IMR-90 (cell line): ENCODE measurements at regions of chr13 and their contacts with region 1.

Region 1: DNA sequence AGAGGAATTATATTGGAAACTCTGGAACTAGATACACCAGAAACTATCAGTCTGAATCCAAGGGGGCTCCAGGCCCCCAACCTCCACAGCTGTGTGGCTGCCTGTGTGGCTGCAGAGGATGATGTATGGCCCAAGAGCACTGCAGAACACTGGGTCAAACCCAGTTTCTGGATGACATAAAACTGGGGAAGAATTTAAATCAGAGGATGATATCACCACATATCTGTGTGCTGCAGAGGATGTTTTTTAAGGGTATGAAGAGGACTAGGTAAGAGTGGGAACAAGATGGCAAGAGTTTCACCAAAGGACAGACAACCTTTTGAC is 226.4 kb downstream of the SUCLA2 start:
- DNase-seq: no peak
- ATAC-seq: no peak
- H3K4me3 ChIP-seq: no peak overlapping the region
- H3K27ac ChIP-seq: no peak overlapping the region
- H3K4me1 ChIP-seq: no peaks in the 10 kb centered on the region
- H3K27me3 ChIP-seq: no peaks in the 10 kb centered on the region; the same call in 1 of the 2 replicates
- CTCF ChIP-seq: no peak
- POLR2A ChIP-seq: no peak
- RAD21 ChIP-seq: no peak

Region 2: DNA sequence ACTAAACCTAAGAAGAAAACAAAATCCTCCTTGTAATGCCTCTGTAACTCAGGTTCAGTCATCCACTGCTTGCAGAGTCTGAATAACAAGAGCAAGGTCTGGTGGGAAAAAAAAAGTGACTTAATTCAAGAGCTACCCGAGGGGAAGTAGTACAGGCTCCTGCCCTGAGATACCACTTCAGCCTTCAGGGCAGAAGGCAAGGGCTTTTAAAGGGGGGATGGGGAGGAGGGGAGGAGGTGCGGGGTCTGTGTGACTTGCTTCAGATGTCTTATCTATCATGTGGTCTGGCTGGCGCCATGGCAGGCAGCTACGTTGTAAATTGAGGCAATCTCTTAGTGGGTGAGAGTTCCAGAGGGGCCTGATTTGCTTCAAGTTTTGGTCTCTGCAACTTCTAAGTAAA is 1496.2 kb before region 1 on chr13:
- CTCF ChIA-PET with region 1: no interaction called
- POLR2A ChIA-PET with region 1: no interaction called
- dilution Hi-C with region 1: no loop called
- in situ Hi-C with region 1: no loop called
- intact Hi-C with region 1: no loop called
- DNase-seq: no peak
- ATAC-seq: no peak
- H3K4me3 ChIP-seq: no peak overlapping the region
- H3K27ac ChIP-seq: no peak overlapping the region
- H3K4me1 ChIP-seq: no peaks in the 10 kb centered on the region
- H3K27me3 ChIP-seq: no peaks in the 10 kb centered on the region
- CTCF ChIP-seq: no peak
- POLR2A ChIP-seq: no peak
- RAD21 ChIP-seq: no peak

Region 3: GRCh38 chr13:46759846-46760245 is 1014.8 kb before region 1 on chr13:
- CTCF ChIA-PET with region 1: no interaction called
- POLR2A ChIA-PET with region 1: no interaction called
- dilution Hi-C with region 1: no loop called
- in situ Hi-C with region 1: no loop called
- intact Hi-C with region 1: loop called (anchors 5 kb)
- DNase-seq: no peak
- ATAC-seq: no peak
- H3K4me3 ChIP-seq: no peak overlapping the region
- H3K27ac ChIP-seq: no peak overlapping the region
- H3K4me1 ChIP-seq: no peaks in the 10 kb centered on the region; the same call in 1 of the 2 replicates
- H3K27me3 ChIP-seq: peaks cover 10% of the 10 kb centered on the region
- CTCF ChIP-seq: no peak
- POLR2A ChIP-seq: no peak
- RAD21 ChIP-seq: no peak

Region 4: DNA sequence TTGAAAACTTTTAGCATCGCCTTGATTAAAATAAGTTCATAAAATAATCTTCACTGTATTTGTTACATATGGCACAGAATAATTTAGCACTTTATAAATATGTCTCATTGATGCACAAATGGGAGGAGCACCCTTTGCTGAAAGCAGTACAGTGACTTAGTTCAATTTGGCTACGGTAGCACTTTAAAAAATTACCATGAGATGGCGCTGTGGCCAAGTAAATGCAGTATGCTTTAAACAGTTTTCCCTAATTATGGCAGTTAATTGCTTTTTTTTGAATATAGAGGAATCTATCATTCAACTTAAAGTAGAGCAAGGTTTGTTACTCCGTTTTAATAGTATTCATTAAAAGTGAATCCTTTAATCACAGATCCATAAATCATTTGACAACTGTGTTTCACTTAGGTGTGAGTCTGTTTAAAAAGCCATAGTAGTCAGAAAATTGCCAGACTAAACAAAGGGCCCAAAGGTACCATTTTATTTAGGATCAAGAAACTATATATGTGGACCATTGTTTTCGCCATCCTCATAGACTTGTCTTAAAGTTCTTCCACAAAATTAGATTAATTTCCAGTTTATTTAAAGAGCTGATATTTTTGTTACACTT is 942.9 kb before region 1 on chr13:
- CTCF ChIA-PET with region 1: interaction called, 3 read pairs
- POLR2A ChIA-PET with region 1: no interaction called
- dilution Hi-C with region 1: no loop called
- in situ Hi-C with region 1: loop called (anchors 5 kb)
- intact Hi-C with region 1: loop called (anchors 1 kb)
- DNase-seq: peak; percentile 58
- ATAC-seq: peak; percentile 79; the same call in 1 of the 2 replicates
- H3K4me3 ChIP-seq: no peak overlapping the region
- H3K27ac ChIP-seq: no peak overlapping the region
- H3K4me1 ChIP-seq: no peaks in the 10 kb centered on the region
- H3K27me3 ChIP-seq: no peaks in the 10 kb centered on the region; the same call in 1 of the 2 replicates
- CTCF ChIP-seq: peak; percentile 90
- POLR2A ChIP-seq: no peak
- RAD21 ChIP-seq: peak; percentile 90

Region 5: DNA sequence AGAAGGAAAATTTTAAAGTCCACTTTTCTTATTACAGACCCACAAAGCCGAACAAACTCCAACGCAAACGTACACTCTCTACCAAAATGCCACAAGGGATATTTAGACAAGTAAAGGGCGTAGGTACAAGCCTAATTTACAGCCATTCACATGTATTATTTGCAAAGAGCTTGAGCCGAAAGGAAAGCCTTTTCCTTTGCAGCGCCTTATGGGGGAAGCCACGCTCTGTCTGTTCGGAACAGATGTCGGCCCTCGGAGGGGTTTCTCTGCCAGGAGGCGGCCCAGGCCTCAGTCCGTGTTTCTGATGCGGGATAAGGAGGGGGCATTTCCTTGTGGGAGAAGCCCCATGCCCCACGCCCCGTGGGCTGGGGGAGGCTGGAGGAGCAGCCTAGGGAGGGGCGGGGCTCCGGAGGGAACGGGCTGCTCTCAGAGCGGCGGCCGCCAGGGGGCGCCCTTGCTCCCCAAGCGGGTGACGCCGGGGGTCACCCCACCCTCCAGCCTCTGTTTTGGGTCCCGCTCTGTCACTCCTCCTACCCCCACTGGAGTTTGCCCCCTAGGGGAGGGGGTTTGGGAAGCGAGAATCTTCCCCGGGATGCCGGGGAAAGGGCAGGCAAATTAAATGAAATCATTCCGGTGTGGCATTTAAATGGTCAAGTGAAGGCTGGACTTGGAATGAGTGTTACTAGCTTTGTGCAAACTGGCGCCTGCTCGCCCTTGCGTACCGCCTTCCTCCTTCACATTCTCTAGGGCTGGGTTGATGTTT is 880.7 kb before region 1 on chr13:
- CTCF ChIA-PET with region 1: no interaction called
- POLR2A ChIA-PET with region 1: no interaction called
- dilution Hi-C with region 1: no loop called
- in situ Hi-C with region 1: no loop called
- intact Hi-C with region 1: loop called (anchors 1 kb)
- DNase-seq: peak; percentile 17
- ATAC-seq: peak; percentile 95
- H3K4me3 ChIP-seq: peak overlapping the region; percentile 63
- H3K27ac ChIP-seq: no peak overlapping the region; the same call in 1 of the 2 replicates
- H3K4me1 ChIP-seq: no peaks in the 10 kb centered on the region
- H3K27me3 ChIP-seq: peaks cover 20% of the 10 kb centered on the region
- CTCF ChIP-seq: peak; percentile 77
- POLR2A ChIP-seq: no peak
- RAD21 ChIP-seq: peak; percentile 62

Region 6: DNA sequence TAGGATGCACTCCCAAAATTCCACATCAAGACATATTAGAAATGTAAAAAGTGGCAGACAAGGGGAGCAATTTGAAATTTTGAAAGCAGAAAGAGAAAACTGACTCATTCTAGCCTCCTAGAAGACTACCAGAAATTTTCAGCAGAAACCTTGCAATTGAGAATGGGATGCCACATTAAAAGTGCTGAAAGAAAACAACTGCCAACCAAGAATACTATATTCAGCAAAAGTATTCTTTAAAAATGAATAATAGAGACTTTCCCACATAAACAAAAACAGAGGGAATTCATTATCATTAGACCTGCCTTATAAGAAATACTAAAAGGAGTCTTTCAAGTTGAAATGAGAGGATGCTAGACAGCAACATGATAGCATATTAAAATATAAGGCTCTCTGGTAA is 799.5 kb before region 1 on chr13:
- CTCF ChIA-PET with region 1: interaction called, 5 read pairs
- POLR2A ChIA-PET with region 1: no interaction called
- dilution Hi-C with region 1: no loop called
- in situ Hi-C with region 1: no loop called
- intact Hi-C with region 1: loop called (anchors 1 kb)
- DNase-seq: no peak
- ATAC-seq: no peak
- H3K4me3 ChIP-seq: no peak overlapping the region
- H3K27ac ChIP-seq: no peak overlapping the region
- H3K4me1 ChIP-seq: no peaks in the 10 kb centered on the region
- H3K27me3 ChIP-seq: no peaks in the 10 kb centered on the region
- CTCF ChIP-seq: no peak
- POLR2A ChIP-seq: no peak
- RAD21 ChIP-seq: no peak

Region 7: DNA sequence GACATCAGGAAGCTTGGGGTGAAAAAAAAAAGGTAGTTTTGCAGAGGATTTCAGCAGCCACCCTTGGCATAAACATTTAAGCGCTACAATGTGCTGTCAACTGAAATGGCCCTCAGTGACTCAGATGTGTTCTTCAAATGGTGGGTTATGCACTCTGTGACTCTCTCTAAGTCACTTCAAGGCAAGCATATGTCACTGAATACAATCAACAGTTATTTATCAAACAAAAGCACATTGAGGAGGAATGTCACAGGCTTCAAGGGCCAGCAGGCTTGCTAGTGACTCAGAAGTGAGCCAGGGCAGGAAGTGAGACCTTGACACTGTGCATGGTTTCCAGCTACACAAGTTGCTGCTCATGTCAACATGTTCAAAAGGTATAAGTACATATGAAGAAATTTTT is 354.1 kb before region 1 on chr13:
- CTCF ChIA-PET with region 1: no interaction called
- POLR2A ChIA-PET with region 1: no interaction called
- dilution Hi-C with region 1: no loop called
- in situ Hi-C with region 1: no loop called
- intact Hi-C with region 1: loop called (anchors 1 kb)
- DNase-seq: peak; percentile 49
- ATAC-seq: peak; percentile 54
- H3K4me3 ChIP-seq: no peak overlapping the region
- H3K27ac ChIP-seq: no peak overlapping the region
- H3K4me1 ChIP-seq: peaks cover 3% of the 10 kb centered on the region; the same call in 1 of the 2 replicates
- H3K27me3 ChIP-seq: no peaks in the 10 kb centered on the region
- CTCF ChIP-seq: no peak
- POLR2A ChIP-seq: no peak
- RAD21 ChIP-seq: no peak